ENCODE measurements at regions of chr10 and their contacts with region 1.

Region 1: GRCh38 chr10:95363303-95363912 is 72.6 kb upstream of the PDLIM1 start:
- DNase-seq: peak in 4 of 5 donors; percentile 18 to 60 (median 36)
- H3K4me3 ChIP-seq: no peak overlapping the region
- H3K4me3 Mint-ChIP-seq: no peak overlapping the region
- H3K27ac ChIP-seq: no peak overlapping the region
- H3K27ac Mint-ChIP-seq: no peak overlapping the region
- H3K4me1 ChIP-seq: no peaks in the 10 kb centered on the region
- H3K4me1 Mint-ChIP-seq: no peaks in the 10 kb centered on the region
- H3K27me3 ChIP-seq: no peaks in the 10 kb centered on the region
- H3K27me3 Mint-ChIP-seq: peaks cover 7 to 17% of the 10 kb centered on the region in 2 donors

Region 2: DNA sequence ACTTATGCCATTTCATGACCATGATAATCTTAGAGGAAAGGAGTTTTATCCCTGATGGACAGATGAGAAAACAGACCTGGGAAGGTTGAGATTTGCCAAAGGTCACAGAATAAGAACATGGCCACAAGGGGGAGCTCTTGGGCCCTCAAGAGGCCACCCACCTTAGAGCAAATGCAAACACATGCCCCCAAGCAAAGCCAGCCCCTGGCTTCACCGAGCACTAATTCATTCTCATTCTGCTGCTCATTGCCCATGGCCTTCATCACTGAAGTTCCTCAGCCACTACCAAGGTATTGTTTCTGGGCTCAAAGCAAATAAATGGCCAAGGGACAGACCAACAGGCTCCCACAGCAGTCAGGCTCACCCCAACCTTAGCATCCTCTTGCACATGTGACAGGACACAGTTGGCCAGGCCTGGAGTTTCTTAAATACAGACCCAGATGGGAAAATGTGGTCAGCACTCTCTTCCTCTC is 116.8 kb before region 1 on chr10:
- CTCF ChIA-PET with region 1: interaction called, 58 read pairs
- POLR2A ChIA-PET with region 1: no interaction called
- DNase-seq: peak; percentile 16 to 70 (median 47)
- H3K4me3 ChIP-seq: no peak overlapping the region
- H3K4me3 Mint-ChIP-seq: no peak overlapping the region
- H3K27ac ChIP-seq: no peak overlapping the region
- H3K27ac Mint-ChIP-seq: peak overlapping the region in 1 of 8 donors; percentile 60
- H3K4me1 ChIP-seq: no peaks in the 10 kb centered on the region
- H3K4me1 Mint-ChIP-seq: peaks cover 0 to 3% (median 0%) of the 10 kb centered on the region in 3 donors
- H3K27me3 ChIP-seq: no peaks in the 10 kb centered on the region
- H3K27me3 Mint-ChIP-seq: peaks cover 1 to 9% of the 10 kb centered on the region in 2 donors

Region 3: DNA sequence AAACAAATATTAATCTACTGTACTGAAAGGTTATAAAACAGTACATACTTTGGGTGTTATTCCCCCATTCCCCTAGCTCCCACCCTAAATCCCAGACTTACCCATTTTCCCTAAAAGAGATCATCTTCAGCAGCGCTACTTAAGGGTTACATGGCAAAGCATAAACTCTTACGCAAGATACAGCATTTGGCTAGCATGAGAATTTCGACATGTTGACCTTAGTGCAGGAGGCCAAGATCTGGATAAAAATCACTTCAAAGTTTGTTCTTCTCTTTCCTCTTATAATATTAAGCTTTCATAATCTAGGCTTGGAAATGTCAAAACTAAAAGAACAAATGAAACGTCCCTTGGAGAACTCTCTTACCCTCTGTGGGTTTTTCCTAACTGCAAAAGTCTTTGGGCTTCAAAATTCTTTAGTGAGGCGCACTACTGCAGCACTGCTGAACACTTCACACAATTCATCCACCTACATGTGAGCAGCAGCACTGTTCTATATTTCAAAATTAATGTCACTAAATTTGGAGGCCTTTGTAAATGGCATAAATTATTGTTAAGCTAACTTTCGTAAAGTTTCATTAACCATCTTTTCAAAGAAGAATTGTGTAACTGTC is 13.1 kb before region 1 on chr10:
- CTCF ChIA-PET with region 1: interaction called, 15 read pairs
- POLR2A ChIA-PET with region 1: no interaction called
- DNase-seq: no peak
- H3K4me3 ChIP-seq: no peak overlapping the region
- H3K4me3 Mint-ChIP-seq: no peak overlapping the region
- H3K27ac ChIP-seq: no peak overlapping the region
- H3K27ac Mint-ChIP-seq: no peak overlapping the region
- H3K4me1 ChIP-seq: no peaks in the 10 kb centered on the region
- H3K4me1 Mint-ChIP-seq: no peaks in the 10 kb centered on the region
- H3K27me3 ChIP-seq: no peaks in the 10 kb centered on the region
- H3K27me3 Mint-ChIP-seq: peaks cover 2 to 3% of the 10 kb centered on the region in 2 donors

Region 4: GRCh38 chr10:95374597-95375209 is 11.3 kb after region 1 on chr10:
- CTCF ChIA-PET with region 1: interaction called, 30 read pairs
- POLR2A ChIA-PET with region 1: no interaction called
- DNase-seq: peak in 4 of 5 donors; percentile 6 to 58 (median 9)
- H3K4me3 ChIP-seq: no peak overlapping the region
- H3K4me3 Mint-ChIP-seq: no peak overlapping the region
- H3K27ac ChIP-seq: no peak overlapping the region
- H3K27ac Mint-ChIP-seq: peak overlapping the region in 1 of 8 donors; percentile 21
- H3K4me1 ChIP-seq: no peaks in the 10 kb centered on the region
- H3K4me1 Mint-ChIP-seq: peaks cover 0 to 14% (median 4%) of the 10 kb centered on the region in 3 donors
- H3K27me3 ChIP-seq: no peaks in the 10 kb centered on the region
- H3K27me3 Mint-ChIP-seq: peaks cover 0 to 24% of the 10 kb centered on the region in 2 donors

Measured in CD8-positive, alpha-beta memory T cell (primary cell).